BJ (cell line): ENCODE measurements at regions of chr1 and their contacts with region 1.

Region 1: DNA sequence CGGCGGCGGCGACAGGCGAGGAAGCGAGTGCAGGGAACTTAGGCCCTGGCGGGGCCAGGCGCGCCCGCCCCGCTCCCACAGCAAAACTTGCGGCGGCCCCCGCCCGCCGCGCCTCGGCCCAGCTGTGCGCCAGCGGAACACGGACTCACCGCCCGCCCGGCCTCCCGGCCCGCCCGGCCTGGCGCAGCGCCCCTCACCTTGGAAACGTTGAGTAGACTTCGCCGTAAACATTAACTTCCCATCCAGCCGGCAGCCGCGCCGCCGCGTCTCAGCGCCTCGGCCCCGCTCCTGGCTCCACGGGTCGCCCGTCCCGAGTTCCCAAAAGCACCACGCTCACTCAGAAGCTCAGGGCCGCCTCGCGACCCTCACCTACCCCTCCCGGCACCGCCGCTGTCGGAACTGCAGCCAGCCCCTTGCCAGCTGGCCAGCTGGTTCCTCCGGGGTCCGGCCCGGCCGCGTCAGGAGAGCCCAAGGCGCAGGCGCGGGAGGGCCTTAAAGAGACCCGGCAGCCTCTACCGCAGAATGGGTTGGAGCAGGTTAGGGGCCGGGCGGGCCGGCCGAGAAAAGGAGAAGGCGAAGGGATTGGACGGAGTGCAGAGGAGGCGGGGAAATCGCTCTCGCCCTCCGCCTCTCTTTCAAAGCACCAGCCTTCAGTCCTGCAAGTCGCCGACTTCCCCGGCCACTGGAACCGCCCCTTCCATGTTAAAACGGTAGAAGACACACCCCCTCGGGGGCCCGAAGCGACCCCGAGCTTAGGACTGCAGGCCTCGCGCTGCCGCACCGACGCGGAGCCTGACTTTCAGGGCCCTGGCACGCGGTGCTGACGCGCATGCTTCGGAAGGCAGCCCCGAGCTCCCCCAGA is at the start of gene EVI5:
- DNase-seq: peak; percentile 92
- H3K4me3 ChIP-seq: peak within 1 kb of the TSS; percentile 89
- H3K27me3 ChIP-seq: no peaks in the 10 kb centered on the region
- CTCF ChIP-seq: peak; percentile 45
- polyA plus RNA-seq, gene EVI5: 8.6 and 13.0 TPM in 2 replicates

Region 2: DNA sequence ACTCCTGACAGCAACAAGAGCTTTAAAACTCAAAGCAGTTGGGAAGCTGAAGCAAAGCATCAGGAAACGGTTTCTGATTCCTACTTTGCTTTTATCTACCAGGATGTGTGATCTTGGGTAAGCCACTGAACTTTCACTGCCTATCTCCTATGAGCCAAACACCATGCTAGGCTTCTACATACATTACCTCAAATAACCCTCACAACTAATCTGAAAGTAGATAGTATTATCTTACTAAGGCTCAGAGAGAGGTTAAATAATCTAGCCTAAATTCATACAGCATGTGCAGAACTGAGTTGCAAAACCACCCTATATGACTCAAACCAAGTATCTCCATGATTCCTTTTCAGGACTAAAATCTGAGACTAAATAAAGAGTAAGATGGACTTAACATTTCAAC is 83.7 kb before region 1 on chr1:
- CTCF ChIA-PET with region 1: no interaction called
- POLR2A ChIA-PET with region 1: interaction called, 10 read pairs
- DNase-seq: no peak
- H3K4me3 ChIP-seq: no peak overlapping the region
- H3K27me3 ChIP-seq: no peaks in the 10 kb centered on the region
- CTCF ChIP-seq: no peak

Region 3: GRCh38 chr1:92755541-92756461 is 29.1 kb before region 1 on chr1:
- CTCF ChIA-PET with region 1: no interaction called
- POLR2A ChIA-PET with region 1: no interaction called
- DNase-seq: no peak
- H3K4me3 ChIP-seq: no peak overlapping the region
- H3K27me3 ChIP-seq: no peaks in the 10 kb centered on the region
- CTCF ChIP-seq: no peak